ENCODE measurements at regions of chr3 and their contacts with region 1.

Region 1: DNA sequence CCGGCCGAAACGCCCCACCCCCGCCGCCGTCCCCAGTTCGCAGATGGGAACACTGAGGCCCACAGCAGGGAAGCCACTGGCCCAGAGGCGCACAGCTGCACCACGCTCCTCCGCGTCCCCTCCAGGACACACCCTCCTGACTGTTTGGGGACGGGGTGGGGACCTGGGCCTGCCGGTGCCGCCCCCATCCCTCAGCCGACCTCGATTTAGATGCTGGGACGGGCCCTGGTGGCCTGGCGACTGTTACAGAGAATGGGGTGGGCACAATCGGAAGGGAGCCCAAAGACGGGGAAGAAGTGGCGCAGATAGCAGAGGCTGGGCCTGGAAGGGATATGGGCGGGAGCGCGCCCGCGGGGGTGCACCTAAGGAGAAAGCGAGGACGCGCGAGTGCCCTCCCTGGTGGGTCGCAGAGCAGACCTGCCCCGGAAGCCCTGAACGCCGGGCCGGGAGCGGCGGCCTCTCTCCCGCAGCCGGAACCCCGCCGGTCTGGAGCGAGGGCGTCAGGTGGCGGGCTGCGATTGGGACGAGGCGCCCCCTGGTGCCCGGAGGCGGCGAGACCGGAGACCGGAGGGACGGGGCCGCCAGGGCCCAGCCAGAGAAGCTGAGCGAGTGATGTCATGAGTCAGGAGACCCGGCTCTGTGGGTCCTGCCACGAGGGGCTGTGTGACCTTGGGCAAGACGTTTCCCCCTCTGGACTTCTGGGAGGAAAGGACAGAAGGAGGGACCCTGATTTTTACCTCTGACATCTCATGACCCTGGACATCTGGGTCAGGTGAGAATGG is 78.4 kb downstream of the IQSEC1 start:
- DNase-seq: peak; percentile 71 to 93 (median 86)
- ATAC-seq: peak; percentile 84
- H3K4me3 ChIP-seq: peak overlapping the region; percentile 81 to 95
- H3K4me3 Mint-ChIP-seq: peak overlapping the region; percentile 98
- H3K27ac ChIP-seq: peak overlapping the region; percentile 65 to 85
- H3K27ac Mint-ChIP-seq: peak overlapping the region; percentile 96
- H3K4me1 ChIP-seq: peaks cover 39% of the 10 kb centered on the region
- H3K4me1 Mint-ChIP-seq: peaks cover 62% of the 10 kb centered on the region
- H3K27me3 ChIP-seq: no peaks in the 10 kb centered on the region
- H3K27me3 Mint-ChIP-seq: no peaks in the 10 kb centered on the region
- CTCF ChIP-seq: peak; percentile 93

Region 2: DNA sequence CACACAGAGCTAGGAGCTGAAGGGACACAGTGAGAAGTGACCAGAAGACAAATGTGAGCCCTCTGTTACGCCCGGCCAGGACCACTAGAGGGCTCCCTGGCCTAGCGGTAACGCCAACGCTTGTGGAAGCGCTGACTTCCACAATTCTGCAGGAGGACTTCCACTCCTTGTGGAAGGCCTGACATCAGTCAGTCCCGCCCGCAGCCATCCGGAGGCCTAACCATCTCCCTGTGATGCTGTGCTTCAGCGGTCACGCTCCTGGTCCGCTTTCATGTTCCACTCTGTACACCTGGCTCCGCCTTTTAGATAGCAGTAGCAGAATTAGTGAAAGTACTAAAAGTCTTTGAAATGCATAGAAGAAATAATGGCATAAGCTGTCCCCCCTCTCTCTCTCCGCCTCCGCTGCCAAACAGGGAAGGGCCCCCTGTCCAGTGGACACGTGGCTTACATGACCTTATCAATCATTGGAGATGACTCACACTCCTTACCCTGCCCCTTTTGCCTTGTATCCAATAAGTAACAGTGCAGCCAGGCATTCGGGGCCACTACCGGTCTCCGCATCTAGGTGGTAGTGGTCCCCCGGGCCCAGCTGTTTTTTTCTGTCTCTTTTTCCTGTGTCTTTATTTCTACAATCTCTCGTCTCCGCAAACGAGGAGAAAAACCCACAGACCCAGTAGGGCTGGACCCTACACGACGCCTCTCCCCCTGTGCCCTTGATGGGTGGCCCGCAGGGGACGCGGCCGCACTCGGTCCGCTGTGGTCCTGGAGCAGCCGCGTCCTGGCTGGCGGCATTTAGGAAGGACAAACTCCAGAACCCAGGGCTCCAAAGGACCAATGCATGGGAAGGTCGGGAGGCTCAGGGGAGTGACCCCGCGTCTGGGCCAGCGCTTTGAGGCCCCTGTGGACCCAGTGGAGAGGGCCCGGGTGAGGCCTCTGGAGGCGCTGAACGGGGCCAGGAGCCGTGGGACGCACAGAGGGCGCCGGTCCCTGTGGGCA is 126.5 kb before region 1 on chr3:
- CTCF ChIA-PET with region 1: interaction called, 4 read pairs
- POLR2A ChIA-PET with region 1: no interaction called
- intact Hi-C with region 1: loop called (anchors 1 to 10 kb)
- DNase-seq: peak in 8 of 9 experiments; percentile 39 to 78 (median 60)
- ATAC-seq: peak; percentile 72
- H3K4me3 ChIP-seq: peak overlapping the region; percentile 42 to 47
- H3K4me3 Mint-ChIP-seq: peak overlapping the region; percentile 78
- H3K27ac ChIP-seq: no peak overlapping the region
- H3K27ac Mint-ChIP-seq: no peak overlapping the region
- H3K4me1 ChIP-seq: peaks cover 9% of the 10 kb centered on the region
- H3K4me1 Mint-ChIP-seq: peaks cover 13% of the 10 kb centered on the region
- H3K27me3 ChIP-seq: peaks cover 3 to 9% of the 10 kb centered on the region in 2 experiments
- H3K27me3 Mint-ChIP-seq: peaks cover 17% of the 10 kb centered on the region
- CTCF ChIP-seq: peak; percentile 73

Region 3: DNA sequence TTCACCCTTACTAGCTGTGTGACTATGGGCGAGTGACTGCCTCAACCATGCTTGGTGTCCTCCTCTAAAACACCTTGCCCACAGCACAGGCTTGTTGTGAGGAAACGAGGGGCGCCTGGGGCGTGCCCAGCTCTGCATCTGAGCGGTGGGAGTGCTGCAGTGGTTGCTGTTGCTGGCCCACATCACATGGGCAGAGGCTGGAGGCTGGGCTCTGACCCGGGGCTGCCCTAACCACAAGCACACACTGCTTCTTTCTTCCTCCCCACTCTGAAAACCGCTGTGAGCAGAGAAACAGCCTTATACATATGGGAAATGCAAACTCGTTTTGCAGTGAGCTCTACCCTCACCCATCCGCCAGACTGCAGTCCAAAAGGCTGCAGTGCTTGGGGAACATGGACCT is 78.6 kb before region 1 on chr3:
- CTCF ChIA-PET with region 1: interaction called, 4 read pairs
- POLR2A ChIA-PET with region 1: no interaction called
- intact Hi-C with region 1: loop called in 1 of 2 experiments (anchors 5 kb)
- DNase-seq: peak in 8 of 9 experiments; percentile 32 to 86 (median 54)
- ATAC-seq: peak; percentile 80
- H3K4me3 ChIP-seq: no peak overlapping the region
- H3K4me3 Mint-ChIP-seq: peak overlapping the region; percentile 49
- H3K27ac ChIP-seq: peak overlapping the region in 1 of 2 experiments; percentile 21
- H3K27ac Mint-ChIP-seq: peak overlapping the region; percentile 37
- H3K4me1 ChIP-seq: peaks cover 31% of the 10 kb centered on the region
- H3K4me1 Mint-ChIP-seq: peaks cover 32% of the 10 kb centered on the region
- H3K27me3 ChIP-seq: no peaks in the 10 kb centered on the region
- H3K27me3 Mint-ChIP-seq: no peaks in the 10 kb centered on the region
- CTCF ChIP-seq: no peak

Region 4: GRCh38 chr3:12967606-12968351 is 27.0 kb before region 1 on chr3:
- CTCF ChIA-PET with region 1: interaction called, 8 read pairs
- POLR2A ChIA-PET with region 1: interaction called, 3 read pairs
- intact Hi-C with region 1: loop called (anchors 1 to 2 kb)
- DNase-seq: peak; percentile 82 to 95 (median 89)
- ATAC-seq: peak; percentile 97
- H3K4me3 ChIP-seq: peak overlapping the region; percentile 42 to 63
- H3K4me3 Mint-ChIP-seq: peak overlapping the region; percentile 82
- H3K27ac ChIP-seq: no peak overlapping the region
- H3K27ac Mint-ChIP-seq: peak overlapping the region; percentile 69
- H3K4me1 ChIP-seq: peaks cover 59% of the 10 kb centered on the region
- H3K4me1 Mint-ChIP-seq: peaks cover 74% of the 10 kb centered on the region
- H3K27me3 ChIP-seq: no peaks in the 10 kb centered on the region
- H3K27me3 Mint-ChIP-seq: no peaks in the 10 kb centered on the region
- CTCF ChIP-seq: no peak

Region 5: GRCh38 chr3:13106308-13107001 is 111.7 kb after region 1 on chr3:
- CTCF ChIA-PET with region 1: no interaction called
- POLR2A ChIA-PET with region 1: no interaction called
- intact Hi-C with region 1: no loop called
- DNase-seq: no peak
- ATAC-seq: no peak
- H3K4me3 ChIP-seq: no peak overlapping the region
- H3K4me3 Mint-ChIP-seq: no peak overlapping the region
- H3K27ac ChIP-seq: no peak overlapping the region
- H3K27ac Mint-ChIP-seq: no peak overlapping the region
- H3K4me1 ChIP-seq: peaks cover 7% of the 10 kb centered on the region
- H3K4me1 Mint-ChIP-seq: peaks cover 12% of the 10 kb centered on the region
- H3K27me3 ChIP-seq: peaks cover 0 to 3% of the 10 kb centered on the region in 2 experiments
- H3K27me3 Mint-ChIP-seq: no peaks in the 10 kb centered on the region
- CTCF ChIP-seq: no peak